GM12878 (cell line): ENCODE measurements at regions of chr14 and their contacts with region 1.

Region 1: DNA sequence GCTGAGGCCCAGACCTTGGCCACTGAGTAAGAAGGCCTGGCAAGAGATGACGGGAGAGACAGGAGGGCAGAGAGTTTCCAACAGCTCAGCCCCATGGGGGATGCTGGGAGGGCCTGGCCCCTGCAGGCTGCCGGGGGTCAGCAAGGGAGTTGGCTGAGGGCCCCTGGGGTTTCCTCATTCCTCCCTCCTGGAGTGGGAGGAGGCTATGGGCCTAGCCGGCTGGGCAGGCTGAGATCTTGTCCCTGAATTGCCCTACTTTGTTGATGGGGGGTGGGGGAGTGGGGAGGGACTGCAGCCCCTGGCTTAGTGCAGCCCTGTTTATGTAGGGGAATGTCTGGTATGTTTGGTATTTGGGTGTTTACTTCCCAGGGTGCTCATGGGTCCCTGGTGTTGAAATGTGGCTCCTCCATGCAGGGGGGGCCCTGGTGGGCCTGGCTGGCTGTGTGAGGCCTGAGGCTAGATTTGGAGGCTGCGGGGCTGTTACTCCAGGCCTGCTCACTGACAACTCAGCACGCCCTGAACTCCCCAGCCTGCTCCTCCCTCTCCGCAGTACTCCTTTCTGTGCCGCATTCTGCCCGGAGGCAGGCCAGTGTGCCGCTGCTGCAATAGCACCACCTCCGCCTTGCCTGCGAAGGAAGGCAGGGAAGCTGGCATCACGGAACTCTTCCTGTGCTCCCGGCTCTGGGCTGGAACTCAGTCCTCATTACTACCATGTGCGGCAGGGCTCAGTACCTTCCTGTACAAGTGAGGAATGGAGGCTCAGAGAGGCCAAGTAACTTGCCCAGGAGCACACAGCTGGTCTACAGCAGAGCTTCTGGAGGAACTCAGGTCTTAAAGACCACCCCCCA is 25.3 kb downstream of the JDP2 start:
- DNase-seq: no peak
- ATAC-seq: no peak
- H3K4me3 ChIP-seq: no peak overlapping the region
- H3K27ac ChIP-seq: peak overlapping the region; percentile 59
- H3K4me1 ChIP-seq: peaks cover 30% of the 10 kb centered on the region
- H3K27me3 ChIP-seq: no peaks in the 10 kb centered on the region
- CTCF ChIP-seq: no peak
- EP300 ChIP-seq: no peak
- POLR2A ChIP-seq: no peak
- RAD21 ChIP-seq: no peak

Region 2: GRCh38 chr14:75307700-75308379 is 145.3 kb before region 1 on chr14:
- CTCF ChIA-PET with region 1: interaction called, 240 read pairs
- POLR2A ChIA-PET with region 1: interaction called, 4 read pairs
- RAD21 ChIA-PET with region 1: interaction called, 53 read pairs
- SMC1A ChIA-PET with region 1: interaction called, 63 read pairs
- in situ Hi-C with region 1: loop called (anchors 10 kb)
- intact Hi-C with region 1: loop called (anchors 1 kb)
- DNase-seq: no peak
- ATAC-seq: peak; percentile 87
- H3K4me3 ChIP-seq: no peak overlapping the region
- H3K27ac ChIP-seq: no peak overlapping the region
- H3K4me1 ChIP-seq: peaks cover 8% of the 10 kb centered on the region
- H3K27me3 ChIP-seq: no peaks in the 10 kb centered on the region
- CTCF ChIP-seq: peak; percentile 87 to 97 (median 88); a peak in 5 of 6 replicates
- EP300 ChIP-seq: no peak
- POLR2A ChIP-seq: no peak
- RAD21 ChIP-seq: peak; percentile 90

Region 3: GRCh38 chr14:75342762-75343599 is 110.1 kb before region 1 on chr14:
- CTCF ChIA-PET with region 1: interaction called, 12 read pairs
- POLR2A ChIA-PET with region 1: no interaction called
- RAD21 ChIA-PET with region 1: interaction called, 5 read pairs
- SMC1A ChIA-PET with region 1: interaction called, 10 read pairs
- in situ Hi-C with region 1: no loop called
- intact Hi-C with region 1: no loop called
- DNase-seq: peak; percentile 57
- ATAC-seq: peak; percentile 82
- H3K4me3 ChIP-seq: no peak overlapping the region
- H3K27ac ChIP-seq: peak overlapping the region; percentile 28; the same call in 1 of the 2 replicates
- H3K4me1 ChIP-seq: peaks cover 35% of the 10 kb centered on the region
- H3K27me3 ChIP-seq: no peaks in the 10 kb centered on the region
- CTCF ChIP-seq: no peak
- EP300 ChIP-seq: no peak
- POLR2A ChIP-seq: no peak
- RAD21 ChIP-seq: no peak

Region 4: DNA sequence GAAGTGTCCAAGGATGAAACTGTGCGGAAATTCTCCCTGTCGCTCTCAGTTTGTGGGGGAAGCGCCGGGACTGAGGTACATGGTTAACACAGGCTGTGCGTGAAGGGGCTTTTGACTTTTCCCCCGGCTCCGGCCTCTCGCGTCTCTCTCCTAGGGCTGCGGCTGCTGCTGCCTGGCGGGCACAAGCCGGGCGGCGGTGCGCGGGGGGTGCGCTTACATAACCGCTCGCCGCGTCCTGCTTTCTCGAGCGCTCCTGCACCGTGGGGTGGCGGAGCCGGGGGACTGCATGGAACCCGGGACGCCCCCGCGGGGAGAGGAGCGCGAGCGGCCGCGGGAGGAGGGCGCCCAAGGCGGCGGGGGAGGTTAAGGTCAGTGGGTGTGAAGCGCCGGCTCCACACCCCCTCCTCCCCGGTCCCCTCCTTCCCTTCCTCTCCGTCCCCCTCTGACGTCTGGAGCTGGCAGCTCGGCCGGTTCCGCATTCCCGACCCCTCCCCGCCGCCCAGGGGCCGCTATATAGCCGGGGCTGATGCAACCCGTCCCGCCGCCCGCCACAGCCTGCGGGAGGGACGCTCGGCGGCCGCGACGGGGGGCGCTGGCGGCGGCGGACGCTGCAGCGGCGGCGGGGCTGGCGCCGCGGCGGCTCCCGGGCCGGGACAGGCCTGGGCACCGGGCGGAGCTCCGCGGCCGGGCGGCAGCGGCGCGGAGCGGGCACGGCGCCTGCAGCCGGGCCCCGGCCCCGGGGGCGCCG is 25.5 kb before region 1 on chr14 and contains the start of gene JDP2:
- CTCF ChIA-PET with region 1: interaction called, 15 read pairs
- POLR2A ChIA-PET with region 1: interaction called, 4 read pairs
- RAD21 ChIA-PET with region 1: interaction called, 23 read pairs
- SMC1A ChIA-PET with region 1: interaction called, 20 read pairs
- in situ Hi-C with region 1: no loop called
- intact Hi-C with region 1: no loop called
- DNase-seq: no peak
- ATAC-seq: peak; percentile 69
- H3K4me3 ChIP-seq: peak within 1 kb of the TSS; percentile 86
- H3K27ac ChIP-seq: peak within 1 kb of the TSS; percentile 91
- H3K4me1 ChIP-seq: peaks cover 27% of the 10 kb centered on the region
- H3K27me3 ChIP-seq: no peaks in the 10 kb centered on the region
- CTCF ChIP-seq: 0 out of 6 replicates have a peak, but pooled peaks of 1 of the 3 experiments have one; percentile 3
- EP300 ChIP-seq: no peak
- POLR2A ChIP-seq: peak; percentile 66; the same call in 1 of the 2 replicates
- RAD21 ChIP-seq: no peak
- polyA plus RNA-seq, gene JDP2: 0.71 to 1.2 TPM

Region 5: GRCh38 chr14:75487155-75487671 is 34.1 kb after region 1 on chr14:
- CTCF ChIA-PET with region 1: interaction called, 82 read pairs
- POLR2A ChIA-PET with region 1: interaction called, 4 read pairs
- RAD21 ChIA-PET with region 1: interaction called, 44 read pairs
- SMC1A ChIA-PET with region 1: interaction called, 42 read pairs
- in situ Hi-C with region 1: no loop called
- intact Hi-C with region 1: loop called (anchors 2 kb)
- DNase-seq: peak; percentile 89
- ATAC-seq: peak; percentile 84
- H3K4me3 ChIP-seq: no peak overlapping the region
- H3K27ac ChIP-seq: peak overlapping the region; percentile 69
- H3K4me1 ChIP-seq: peaks cover 33% of the 10 kb centered on the region
- H3K27me3 ChIP-seq: no peaks in the 10 kb centered on the region
- CTCF ChIP-seq: no peak
- EP300 ChIP-seq: peak; percentile 75 to 86; a peak in 3 of 4 replicates
- POLR2A ChIP-seq: no peak
- RAD21 ChIP-seq: peak; percentile 9; the same call in 1 of the 2 replicates

Region 6: DNA sequence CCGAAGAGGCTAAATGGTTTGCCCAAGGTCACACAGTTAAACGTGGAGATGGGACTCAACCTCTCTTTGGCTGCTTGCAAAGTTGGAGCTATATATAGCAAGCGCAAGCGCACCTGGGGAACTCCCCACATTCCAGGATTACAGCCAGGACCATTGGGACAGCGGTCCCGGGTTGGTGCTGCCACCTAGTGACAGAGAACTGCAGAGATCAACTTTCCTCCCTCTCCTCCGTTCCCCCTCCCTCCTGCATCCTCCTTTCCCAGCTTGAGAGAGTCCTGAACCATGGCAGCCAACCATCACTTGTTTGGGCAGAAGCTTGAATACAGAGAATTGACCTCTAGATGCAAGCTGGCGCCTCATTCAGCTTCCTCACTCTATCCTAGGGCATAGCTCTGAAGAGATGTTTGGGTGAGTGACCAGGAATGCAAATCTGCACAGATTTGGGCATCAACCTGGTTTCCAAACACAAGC is 107.9 kb after region 1 on chr14:
- CTCF ChIA-PET with region 1: interaction called, 34 read pairs
- POLR2A ChIA-PET with region 1: interaction called, 5 read pairs
- RAD21 ChIA-PET with region 1: interaction called, 28 read pairs
- SMC1A ChIA-PET with region 1: interaction called, 19 read pairs
- in situ Hi-C with region 1: no loop called
- intact Hi-C with region 1: no loop called
- DNase-seq: no peak
- ATAC-seq: peak; percentile 77
- H3K4me3 ChIP-seq: no peak overlapping the region
- H3K27ac ChIP-seq: no peak overlapping the region
- H3K4me1 ChIP-seq: peaks cover 27% of the 10 kb centered on the region
- H3K27me3 ChIP-seq: no peaks in the 10 kb centered on the region
- CTCF ChIP-seq: peak; percentile 84 to 91 (median 86)
- EP300 ChIP-seq: no peak
- POLR2A ChIP-seq: no peak
- RAD21 ChIP-seq: peak; percentile 82